ENCODE measurements at regions of chr3 and their contacts with region 1.

Region 1: GRCh38 chr3:118742760-118743159 is 291.9 kb downstream of the IGSF11 start:
- DNase-seq: no peak
- H3K4me3 ChIP-seq: no peak overlapping the region
- H3K27ac ChIP-seq: no peak overlapping the region
- H3K4me1 ChIP-seq: no peaks in the 10 kb centered on the region
- H3K27me3 ChIP-seq: no peaks in the 10 kb centered on the region
- CTCF ChIP-seq: no peak
- POLR2A ChIP-seq: no peak

Region 2: GRCh38 chr3:117836296-117836695 is 906.5 kb before region 1 on chr3:
- intact Hi-C with region 1: loop called (anchors 10 kb)
- DNase-seq: no peak
- H3K4me3 ChIP-seq: no peak overlapping the region
- H3K27ac ChIP-seq: no peak overlapping the region
- H3K4me1 ChIP-seq: no peaks in the 10 kb centered on the region
- H3K27me3 ChIP-seq: no peaks in the 10 kb centered on the region
- CTCF ChIP-seq: no peak
- POLR2A ChIP-seq: no peak

Measured in breast epithelium (tissue), 4 donors.